T-cell (primary cell): ENCODE measurements at regions of chr9 and their contacts with region 1.

Region 1: GRCh38 chr9:20972684-20973083 is 58.8 kb downstream of the HACD4 start:
- DNase-seq: no peak
- ATAC-seq: no peak
- H3K4me3 ChIP-seq: no peak overlapping the region
- H3K4me3 Mint-ChIP-seq: no peak overlapping the region
- H3K27ac ChIP-seq: no peak overlapping the region
- H3K27ac Mint-ChIP-seq: no peak overlapping the region
- H3K4me1 ChIP-seq: no peaks in the 10 kb centered on the region
- H3K4me1 Mint-ChIP-seq: peaks cover 0 to 2% (median 0%) of the 10 kb centered on the region in 3 donors
- H3K27me3 ChIP-seq: no peaks in the 10 kb centered on the region
- H3K27me3 Mint-ChIP-seq: no peaks in the 10 kb centered on the region

Region 2: DNA sequence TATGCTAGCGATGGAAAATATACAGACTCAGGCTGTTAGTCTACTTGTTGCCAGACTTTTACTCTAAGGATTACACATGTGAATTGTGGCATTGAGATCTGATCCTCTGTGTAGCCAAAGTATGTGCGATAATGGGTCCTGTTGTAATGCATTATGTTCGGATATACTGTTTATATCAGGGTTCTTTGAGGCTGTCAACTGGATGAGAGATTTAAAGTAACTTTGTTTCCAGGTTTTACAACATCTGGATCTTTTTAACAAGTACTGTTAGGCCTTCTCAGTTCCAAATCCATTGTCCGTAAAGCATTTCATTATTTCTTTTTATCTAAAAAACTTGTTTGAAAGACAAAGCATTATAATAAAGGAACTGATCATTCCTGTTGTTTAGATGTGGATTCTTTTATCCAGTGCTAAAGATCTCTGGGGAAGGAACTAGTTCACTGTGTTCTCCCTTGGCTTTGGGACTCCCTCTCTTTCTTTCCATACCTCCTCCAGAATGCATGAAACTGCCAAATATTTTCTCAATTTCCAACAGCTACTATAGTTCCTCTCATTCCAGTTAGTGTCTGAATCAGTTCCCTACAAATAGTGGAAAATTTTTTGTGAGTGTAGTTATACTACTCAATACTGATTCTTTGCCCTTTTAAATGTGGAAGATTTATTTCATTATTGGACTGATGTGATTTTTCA is 10.0 kb before region 1 on chr9:
- CTCF ChIA-PET with region 1: interaction called in 1 of 2 experiments, 12 read pairs
- POLR2A ChIA-PET with region 1: no interaction called
- DNase-seq: no peak
- ATAC-seq: no peak
- H3K4me3 ChIP-seq: no peak overlapping the region
- H3K4me3 Mint-ChIP-seq: no peak overlapping the region
- H3K27ac ChIP-seq: no peak overlapping the region
- H3K27ac Mint-ChIP-seq: no peak overlapping the region
- H3K4me1 ChIP-seq: no peaks in the 10 kb centered on the region
- H3K4me1 Mint-ChIP-seq: no peaks in the 10 kb centered on the region
- H3K27me3 ChIP-seq: no peaks in the 10 kb centered on the region
- H3K27me3 Mint-ChIP-seq: no peaks in the 10 kb centered on the region